GM13976 (cell line): ENCODE measurements at regions of chr12 and their contacts with region 1.

Region 1: DNA sequence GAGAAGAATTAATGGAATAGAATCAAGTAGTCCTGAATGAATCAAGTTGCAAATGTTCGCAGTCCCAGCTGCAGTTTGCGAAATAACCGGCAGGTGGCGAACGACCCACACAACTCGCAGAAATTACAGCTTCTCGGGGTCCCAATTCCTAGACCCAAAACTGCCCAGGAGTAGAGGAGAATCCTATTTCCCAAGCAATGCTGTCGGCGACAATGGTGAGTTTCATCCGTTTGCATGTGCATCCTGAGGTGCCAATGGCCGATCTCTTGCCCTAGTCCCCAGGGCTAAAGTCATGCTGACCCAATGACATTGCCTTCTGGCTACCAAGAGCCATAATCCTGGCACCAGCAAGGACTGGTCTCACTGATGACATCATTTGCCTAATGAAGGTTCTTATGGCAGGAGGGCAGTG is 8.5 kb upstream of the ASCL1 start:
- DNase-seq: no peak
- CTCF ChIP-seq: peak; percentile 88

Region 2: DNA sequence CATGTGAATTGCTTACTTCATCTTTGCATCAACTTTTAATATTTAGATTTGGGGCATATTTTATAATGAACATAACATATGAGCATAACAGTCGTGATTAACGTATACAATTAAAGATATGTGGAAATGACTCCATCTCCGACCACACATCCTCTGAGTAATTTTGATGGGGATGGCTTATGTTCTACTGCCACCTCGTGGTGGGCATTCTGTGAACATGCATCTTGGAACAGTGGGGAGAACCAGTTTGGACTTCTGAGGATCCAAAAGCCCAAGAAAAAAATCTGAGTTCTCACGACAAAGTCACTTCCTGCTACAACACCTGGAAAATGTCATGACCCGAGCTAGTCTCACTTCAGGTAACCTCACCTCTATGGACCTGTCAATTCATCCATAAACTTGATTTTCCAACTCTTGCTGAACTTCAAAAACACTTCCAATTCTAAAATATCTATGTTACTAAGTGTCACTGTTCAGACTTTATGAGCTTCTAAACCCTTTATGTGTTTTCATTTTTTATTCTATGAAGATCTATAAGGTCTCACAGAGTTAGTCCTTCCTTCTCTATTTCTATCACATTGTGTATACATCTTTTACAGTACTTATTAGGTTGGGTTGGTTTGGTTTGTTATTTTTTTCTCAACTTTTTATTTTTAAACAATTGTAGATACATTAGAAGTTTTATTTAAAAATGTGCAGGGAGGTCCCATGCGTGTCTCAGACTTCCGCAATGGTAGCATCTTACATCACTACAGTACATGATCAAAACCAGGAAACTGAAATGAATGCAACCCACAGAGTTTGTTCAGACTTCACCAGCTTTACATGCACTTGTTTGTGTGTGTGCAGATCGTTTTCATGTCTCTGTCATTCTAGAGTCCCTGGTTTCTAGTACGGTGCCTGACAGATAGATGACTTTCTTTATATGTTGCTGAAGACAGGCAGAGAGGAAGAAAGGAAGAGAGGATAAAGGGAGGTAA is 600.0 kb after region 1 on chr12:
- in situ Hi-C with region 1: loop called (anchors 10 kb)
- DNase-seq: peak; percentile 41
- CTCF ChIP-seq: peak; percentile 73